Activated naive CD4-positive, alpha-beta T cell treated with anti-CD3 and anti-CD28 coated beads for 36 hours (primary cell): ENCODE measurements at regions of chr15 and their contacts with region 1.

Region 1: GRCh38 chr15:98311566-98312188 is 336.7 kb upstream of the IGF1R start:
- DNase-seq: peak; percentile 90
- H3K4me3 Mint-ChIP-seq: no peak overlapping the region
- H3K27ac Mint-ChIP-seq: no peak overlapping the region
- H3K4me1 Mint-ChIP-seq: no peaks in the 10 kb centered on the region
- H3K27me3 Mint-ChIP-seq: peaks cover 18% of the 10 kb centered on the region

Region 2: DNA sequence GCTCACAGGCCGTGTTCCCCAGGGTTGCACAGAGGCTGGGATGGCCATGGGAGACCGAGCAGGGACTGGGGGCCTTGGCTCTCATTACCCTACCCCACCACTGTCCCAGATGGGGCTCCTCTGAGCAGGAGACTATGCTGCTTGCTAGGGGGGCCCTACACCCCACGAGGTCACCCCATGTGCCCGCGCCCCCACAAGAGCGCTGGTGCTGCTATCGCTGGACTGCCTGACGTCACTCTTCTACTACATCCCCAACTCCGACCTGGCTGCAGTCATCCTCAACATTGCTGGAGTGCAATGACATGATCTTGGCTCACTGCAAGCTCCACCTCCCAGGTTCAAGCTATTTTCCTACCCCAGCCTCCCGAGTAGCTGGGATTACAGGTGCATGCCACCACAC is 43.5 kb before region 1 on chr15:
- CTCF ChIA-PET with region 1: no interaction called
- intact Hi-C with region 1: no loop called
- DNase-seq: no peak
- H3K4me3 Mint-ChIP-seq: no peak overlapping the region
- H3K27ac Mint-ChIP-seq: no peak overlapping the region
- H3K4me1 Mint-ChIP-seq: no peaks in the 10 kb centered on the region
- H3K27me3 Mint-ChIP-seq: no peaks in the 10 kb centered on the region

Region 3: GRCh38 chr15:98326810-98327209 is 15.1 kb after region 1 on chr15:
- CTCF ChIA-PET with region 1: interaction called, 12 read pairs
- intact Hi-C with region 1: no loop called
- DNase-seq: no peak
- H3K4me3 Mint-ChIP-seq: no peak overlapping the region
- H3K27ac Mint-ChIP-seq: no peak overlapping the region
- H3K4me1 Mint-ChIP-seq: no peaks in the 10 kb centered on the region
- H3K27me3 Mint-ChIP-seq: peaks cover 13% of the 10 kb centered on the region

Region 4: DNA sequence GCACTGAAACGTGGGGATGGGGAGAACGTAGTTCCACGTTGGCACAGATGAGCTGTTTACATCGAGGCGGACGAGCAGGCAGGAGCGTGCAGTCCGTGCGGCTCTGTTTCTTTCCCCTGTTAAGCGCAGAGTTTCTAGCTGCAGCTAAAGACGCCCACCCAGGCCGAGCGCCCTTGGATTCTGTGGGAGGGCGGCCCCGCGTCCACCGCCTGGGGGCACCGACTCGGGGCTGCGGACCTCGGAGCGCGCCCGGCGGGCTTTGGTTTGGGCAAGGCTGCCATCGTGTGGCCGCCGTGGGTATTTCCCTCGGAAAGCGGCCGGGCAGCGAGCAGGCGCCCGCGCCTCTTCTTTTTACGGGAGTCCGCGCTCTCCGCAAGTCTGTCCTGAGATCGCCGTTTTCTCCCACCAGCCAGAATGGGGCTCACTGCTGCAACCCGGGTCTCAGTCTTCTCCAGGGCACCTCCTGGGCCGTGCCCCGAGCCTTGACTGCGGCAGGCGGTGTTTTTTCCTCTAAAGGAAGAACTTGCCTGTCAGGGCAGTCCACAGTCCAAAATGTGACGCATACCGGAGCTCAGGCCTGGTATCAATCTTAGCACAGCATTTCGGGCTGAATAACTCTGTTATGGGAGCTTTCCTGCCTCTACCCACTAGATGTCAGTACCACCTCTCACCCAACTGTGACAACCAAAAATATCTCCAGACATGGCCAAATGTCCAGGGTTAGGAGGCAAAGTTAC is 116.7 kb after region 1 on chr15:
- CTCF ChIA-PET with region 1: interaction called, 66 read pairs
- intact Hi-C with region 1: loop called (anchors 1 kb)
- DNase-seq: peak; percentile 62
- H3K4me3 Mint-ChIP-seq: peak overlapping the region; percentile 45
- H3K27ac Mint-ChIP-seq: no peak overlapping the region
- H3K4me1 Mint-ChIP-seq: peaks cover 3% of the 10 kb centered on the region
- H3K27me3 Mint-ChIP-seq: peaks cover 51% of the 10 kb centered on the region

Region 5: GRCh38 chr15:99076552-99077308 is 765.1 kb after region 1 on chr15:
- CTCF ChIA-PET with region 1: no interaction called
- intact Hi-C with region 1: loop called (anchors 10 kb)
- DNase-seq: peak; percentile 61
- H3K4me3 Mint-ChIP-seq: peak overlapping the region; percentile 72
- H3K27ac Mint-ChIP-seq: no peak overlapping the region
- H3K4me1 Mint-ChIP-seq: peaks cover 7% of the 10 kb centered on the region
- H3K27me3 Mint-ChIP-seq: peaks cover 9% of the 10 kb centered on the region